ENCODE measurements at regions of chr2 and their contacts with region 1.

Region 1: DNA sequence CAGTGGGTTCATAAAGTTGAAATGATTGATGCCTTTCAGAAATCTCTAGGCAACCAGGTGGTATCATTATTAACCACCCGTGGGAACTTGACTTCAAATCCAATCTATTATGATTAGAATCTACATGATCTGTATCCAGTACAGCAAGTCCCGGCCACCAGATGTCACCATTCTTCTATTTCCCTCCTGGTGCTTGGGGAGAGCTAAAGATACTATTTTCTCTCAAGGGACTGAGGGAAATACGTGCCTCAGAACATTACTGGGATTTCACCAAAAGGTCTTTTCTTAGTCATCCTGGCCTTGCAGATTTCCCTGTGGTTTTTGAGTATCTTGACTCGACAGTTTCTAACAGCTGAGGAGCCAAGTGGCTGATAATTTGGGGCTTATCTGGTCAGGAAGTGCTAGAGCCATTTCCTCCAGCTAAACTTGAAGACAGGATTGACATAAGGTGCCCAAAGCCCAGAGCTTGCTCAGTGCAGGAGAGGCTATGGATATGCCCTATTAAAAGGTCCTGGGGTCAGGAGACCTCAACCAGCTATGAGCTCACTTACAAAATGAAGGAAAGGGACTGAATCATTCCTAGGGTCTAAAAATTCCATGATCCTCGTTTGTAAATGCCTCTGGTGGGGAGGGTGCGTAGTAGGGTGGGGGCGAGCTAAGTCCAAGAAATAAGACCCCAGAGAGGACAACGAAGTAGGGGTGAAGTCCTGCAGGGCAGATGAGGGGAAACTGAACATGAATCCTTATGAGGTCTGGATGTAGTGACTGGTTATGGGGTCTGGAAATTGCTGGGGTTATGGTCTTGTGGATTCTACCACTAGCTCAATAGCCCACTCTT is 135.4 kb upstream of the MGAT5 start:
- DNase-seq: peak; percentile 66 to 93 (median 74)
- ATAC-seq: peak; percentile 80
- H3K4me3 ChIP-seq: no peak overlapping the region
- H3K27ac ChIP-seq: peak overlapping the region; percentile 43; the same call in 2 of the 3 replicates
- H3K4me1 ChIP-seq: peaks cover 11 to 23% of the 10 kb centered on the region in 2 experiments
- H3K27me3 ChIP-seq: peaks cover 0 to 3% of the 10 kb centered on the region in 2 experiments; a peak in 4 of 5 replicates
- CTCF ChIP-seq: peak; percentile 78 to 93 (median 80)
- EP300 ChIP-seq: peak; percentile 99
- POLR2A ChIP-seq: no peak
- RAD21 ChIP-seq: peak; percentile 99

Region 2: GRCh38 chr2:133886735-133887660 is 231.5 kb before region 1 on chr2:
- CTCF ChIA-PET with region 1: no interaction called
- POLR2A ChIA-PET with region 1: no interaction called
- in situ Hi-C with region 1: no loop called
- intact Hi-C with region 1: loop called (anchors 1 kb)
- DNase-seq: peak; percentile 57 to 70 (median 68)
- ATAC-seq: peak; percentile 94
- H3K4me3 ChIP-seq: no peak overlapping the region
- H3K27ac ChIP-seq: no peak overlapping the region
- H3K4me1 ChIP-seq: no peaks in the 10 kb centered on the region
- H3K27me3 ChIP-seq: peaks cover 3 to 6% of the 10 kb centered on the region in 2 experiments; a peak in 3 of 5 replicates
- CTCF ChIP-seq: peak; percentile 60 to 72 (median 69)
- EP300 ChIP-seq: no peak
- POLR2A ChIP-seq: no peak
- RAD21 ChIP-seq: peak; percentile 60 to 69

Region 3: GRCh38 chr2:134039912-134040581 is 78.5 kb before region 1 on chr2:
- CTCF ChIA-PET with region 1: no interaction called
- POLR2A ChIA-PET with region 1: no interaction called
- in situ Hi-C with region 1: no loop called
- intact Hi-C with region 1: no loop called
- DNase-seq: no peak
- ATAC-seq: no peak
- H3K4me3 ChIP-seq: no peak overlapping the region
- H3K27ac ChIP-seq: no peak overlapping the region
- H3K4me1 ChIP-seq: no peaks in the 10 kb centered on the region
- H3K27me3 ChIP-seq: no peaks in the 10 kb centered on the region
- CTCF ChIP-seq: no peak
- EP300 ChIP-seq: no peak
- POLR2A ChIP-seq: no peak
- RAD21 ChIP-seq: no peak

Region 4: DNA sequence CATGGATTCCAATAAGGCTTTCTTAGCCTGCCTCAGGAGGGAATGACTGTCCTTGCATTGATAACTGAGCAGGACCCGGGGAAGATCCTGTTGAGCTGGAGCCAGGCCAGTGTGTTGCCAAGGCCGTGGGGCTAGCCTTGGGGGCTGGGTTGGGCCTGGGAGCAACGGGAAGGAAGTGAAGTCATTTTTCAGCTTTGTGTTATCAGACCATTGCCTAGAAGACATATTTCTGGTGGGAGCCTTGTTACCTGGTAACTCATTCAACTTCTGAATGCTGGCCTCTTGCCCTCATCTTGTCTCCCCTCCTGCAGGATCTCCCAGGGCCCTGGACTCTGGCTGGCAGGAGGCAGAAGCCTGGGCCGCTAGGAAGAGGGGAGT is 42.7 kb after region 1 on chr2:
- CTCF ChIA-PET with region 1: no interaction called
- POLR2A ChIA-PET with region 1: no interaction called
- in situ Hi-C with region 1: no loop called
- intact Hi-C with region 1: loop called (anchors 2 kb)
- DNase-seq: peak; percentile 22 to 81 (median 40)
- ATAC-seq: peak; percentile 86
- H3K4me3 ChIP-seq: no peak overlapping the region
- H3K27ac ChIP-seq: peak overlapping the region; percentile 56; the same call in 2 of the 3 replicates
- H3K4me1 ChIP-seq: peaks cover 22 to 24% of the 10 kb centered on the region in 2 experiments
- H3K27me3 ChIP-seq: no peaks in the 10 kb centered on the region
- CTCF ChIP-seq: no peak
- EP300 ChIP-seq: no peak; the same call in 1 of the 2 replicates
- POLR2A ChIP-seq: no peak
- RAD21 ChIP-seq: no peak

Region 5: GRCh38 chr2:134218930-134219658 is 100.6 kb after region 1 on chr2:
- CTCF ChIA-PET with region 1: no interaction called
- POLR2A ChIA-PET with region 1: no interaction called
- in situ Hi-C with region 1: no loop called
- intact Hi-C with region 1: loop called (anchors 1 kb)
- DNase-seq: peak in 1 of 4 experiments; percentile 32
- ATAC-seq: peak; percentile 53
- H3K4me3 ChIP-seq: no peak overlapping the region
- H3K27ac ChIP-seq: no peak overlapping the region
- H3K4me1 ChIP-seq: peaks cover 4 to 21% of the 10 kb centered on the region in 2 experiments; a peak in 3 of 5 replicates
- H3K27me3 ChIP-seq: no peaks in the 10 kb centered on the region
- CTCF ChIP-seq: no peak
- EP300 ChIP-seq: no peak
- POLR2A ChIP-seq: no peak
- RAD21 ChIP-seq: no peak

Region 6: GRCh38 chr2:134411828-134412638 is 293.5 kb after region 1 on chr2:
- CTCF ChIA-PET with region 1: interaction called, 14 read pairs
- POLR2A ChIA-PET with region 1: interaction called, 7 read pairs
- in situ Hi-C with region 1: loop called (anchors 25 kb)
- intact Hi-C with region 1: loop called (anchors 1 kb)
- DNase-seq: peak; percentile 15 to 66 (median 29)
- ATAC-seq: peak; percentile 95
- H3K4me3 ChIP-seq: no peak overlapping the region
- H3K27ac ChIP-seq: no peak overlapping the region
- H3K4me1 ChIP-seq: no peaks in the 10 kb centered on the region; a peak in 1 of 5 replicates
- H3K27me3 ChIP-seq: no peaks in the 10 kb centered on the region
- CTCF ChIP-seq: peak; percentile 64 to 72 (median 70)
- EP300 ChIP-seq: no peak
- POLR2A ChIP-seq: no peak
- RAD21 ChIP-seq: peak; percentile 60 to 74

Region 7: GRCh38 chr2:134460583-134460998 is 342.1 kb after region 1 on chr2:
- CTCF ChIA-PET with region 1: no interaction called
- POLR2A ChIA-PET with region 1: no interaction called
- in situ Hi-C with region 1: loop called (anchors 10 kb)
- intact Hi-C with region 1: no loop called
- DNase-seq: peak; percentile 35 to 56 (median 44)
- ATAC-seq: peak; percentile 88
- H3K4me3 ChIP-seq: no peak overlapping the region
- H3K27ac ChIP-seq: no peak overlapping the region
- H3K4me1 ChIP-seq: no peaks in the 10 kb centered on the region
- H3K27me3 ChIP-seq: peaks cover 9 to 77% of the 10 kb centered on the region in 2 experiments
- CTCF ChIP-seq: peak; percentile 63 to 75 (median 65)
- EP300 ChIP-seq: no peak
- POLR2A ChIP-seq: no peak
- RAD21 ChIP-seq: peak; percentile 77 to 86

Measured in K562 (cell line).